Sigmoid colon (tissue), 7 donors: ENCODE measurements at regions of chr16 and their contacts with region 1.

Region 1: DNA sequence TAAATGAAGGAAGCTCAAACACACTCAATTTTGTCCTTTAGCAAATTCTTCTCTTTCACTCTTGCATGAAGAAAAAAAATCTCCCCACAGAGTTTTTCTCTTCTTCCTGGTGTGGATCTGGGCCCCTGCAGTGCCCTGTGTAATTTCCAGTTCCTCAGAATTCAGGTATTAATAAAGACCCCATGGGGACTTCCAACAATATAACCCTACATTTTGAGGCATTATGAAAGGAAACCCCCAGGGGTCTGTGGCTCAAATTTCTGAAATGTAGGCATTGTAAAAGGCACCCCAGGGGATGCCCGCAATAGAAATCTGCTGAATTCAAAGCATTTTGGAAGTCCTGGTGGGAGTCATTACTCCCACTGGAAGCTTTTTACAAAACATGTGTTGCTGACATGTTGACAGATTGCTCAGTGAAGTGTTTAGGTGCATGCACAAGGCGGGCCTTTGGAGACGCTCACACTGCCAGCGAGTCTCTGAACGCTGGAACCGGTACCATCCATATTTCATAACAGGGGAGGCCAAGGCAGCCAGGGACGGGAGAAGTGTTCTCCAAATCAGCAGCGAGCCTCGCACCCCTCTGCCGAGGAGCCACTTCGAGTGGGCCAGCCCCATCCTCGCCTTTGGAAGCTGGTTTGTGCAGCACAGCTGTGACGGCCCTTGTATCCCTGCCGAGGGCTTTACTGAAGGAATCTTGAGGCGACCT is 154.0 kb downstream of the ZNF423 start:
- DNase-seq: peak; percentile 88
- H3K4me3 ChIP-seq: peak overlapping the region in 1 of 4 donors; percentile 7
- H3K27ac ChIP-seq: peak overlapping the region; percentile 7 to 77 (median 58)
- H3K4me1 ChIP-seq: peaks cover 0 to 36% (median 26%) of the 10 kb centered on the region in 4 donors
- H3K27me3 ChIP-seq: no peaks in the 10 kb centered on the region
- CTCF ChIP-seq: no peak
- EP300 ChIP-seq: no peak
- POLR2A ChIP-seq: no peak

Region 2: DNA sequence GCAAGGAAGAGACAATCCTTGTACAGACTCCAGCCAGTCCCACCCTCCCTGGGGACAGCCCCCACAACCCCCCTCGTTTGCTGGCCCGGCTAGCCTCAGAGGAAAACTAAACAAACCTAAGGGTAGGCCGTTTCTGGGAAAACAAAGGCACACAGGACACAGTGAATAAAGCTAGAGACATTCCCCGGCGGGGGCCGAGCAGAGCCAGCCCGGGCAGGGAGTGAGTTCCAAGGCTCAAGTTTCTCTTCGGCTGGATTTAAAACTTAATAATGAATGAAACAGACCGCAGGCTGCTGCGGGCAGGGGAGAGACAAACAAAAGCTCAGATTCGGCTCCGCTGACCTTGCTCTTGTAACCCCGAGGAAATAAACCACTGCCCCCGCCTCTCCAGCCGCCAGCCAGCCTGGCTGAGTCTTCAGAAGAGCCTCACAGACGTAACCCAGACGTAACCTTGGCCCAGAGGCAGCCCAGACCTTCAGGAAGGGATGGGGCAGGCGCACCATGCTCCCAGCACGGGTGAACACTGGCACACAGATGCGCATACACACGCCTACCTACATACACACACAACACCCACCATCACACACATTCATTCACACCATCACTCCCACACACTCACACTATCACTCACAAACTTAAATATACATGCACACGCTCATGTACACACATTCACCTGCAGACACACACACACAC is 62.1 kb before region 1 on chr16:
- intact Hi-C with region 1: no loop called
- DNase-seq: no peak
- H3K4me3 ChIP-seq: peak overlapping the region in 1 of 4 donors; percentile 13
- H3K27ac ChIP-seq: peak overlapping the region; percentile 31 to 77 (median 67)
- H3K4me1 ChIP-seq: peaks cover 0 to 28% (median 20%) of the 10 kb centered on the region in 4 donors
- H3K27me3 ChIP-seq: no peaks in the 10 kb centered on the region
- CTCF ChIP-seq: no peak
- EP300 ChIP-seq: no peak
- POLR2A ChIP-seq: no peak

Region 3: DNA sequence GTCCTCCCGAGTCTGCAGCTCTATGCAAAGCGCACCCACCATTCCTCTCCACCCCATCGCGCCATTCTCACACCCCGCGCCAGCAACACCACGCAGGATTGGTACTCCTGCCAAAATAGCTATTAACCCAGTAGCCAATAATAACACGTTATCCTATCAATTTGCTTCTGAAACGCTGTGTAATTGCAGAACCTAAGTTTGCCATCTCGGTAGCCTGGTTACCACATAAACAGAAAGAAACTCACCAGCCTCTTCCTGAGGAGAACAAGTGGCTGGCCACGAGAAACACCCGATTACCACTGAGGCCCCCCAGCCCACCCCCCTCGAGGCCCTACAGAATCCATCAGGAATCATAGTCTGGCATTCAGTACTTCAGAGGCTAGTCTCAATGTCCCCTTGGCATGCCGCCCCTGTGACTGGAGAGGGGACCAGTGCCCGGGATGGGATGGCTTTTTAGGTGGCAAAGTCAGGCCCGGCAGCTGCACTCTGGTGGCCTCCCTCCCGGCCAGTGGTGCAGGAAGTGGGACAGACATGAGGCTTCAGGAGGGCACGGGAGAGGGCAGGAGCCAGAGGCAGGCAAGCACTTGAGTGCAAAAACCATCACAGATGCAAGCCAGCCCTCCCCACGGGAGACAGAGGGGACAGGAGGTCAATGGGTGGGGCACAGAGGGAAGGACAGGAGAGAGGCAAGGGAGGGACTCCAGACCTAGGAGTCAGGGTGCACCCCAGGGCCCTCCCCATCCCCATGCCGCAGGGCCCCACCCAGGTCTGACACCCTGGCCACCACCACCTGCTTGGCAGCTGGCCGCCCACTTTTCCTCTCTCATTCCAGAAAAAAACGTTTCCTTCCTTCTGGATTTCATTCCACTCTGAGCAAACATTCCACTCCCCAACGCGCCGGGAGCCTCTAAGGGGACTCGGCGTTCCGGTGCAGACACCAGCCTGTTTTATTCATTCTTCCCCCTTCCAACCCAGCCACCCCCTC is 38.6 kb before region 1 on chr16:
- intact Hi-C with region 1: loop called (anchors 5 kb)
- DNase-seq: no peak
- H3K4me3 ChIP-seq: peak overlapping the region in 3 of 4 donors; percentile 27 to 40 (median 38)
- H3K27ac ChIP-seq: peak overlapping the region; percentile 75 to 87 (median 82)
- H3K4me1 ChIP-seq: peaks cover 0 to 39% (median 32%) of the 10 kb centered on the region in 4 donors
- H3K27me3 ChIP-seq: no peaks in the 10 kb centered on the region
- CTCF ChIP-seq: no peak
- EP300 ChIP-seq: no peak
- POLR2A ChIP-seq: no peak

Region 4: GRCh38 chr16:49739381-49739780 is 37.4 kb after region 1 on chr16:
- intact Hi-C with region 1: no loop called
- DNase-seq: no peak
- H3K4me3 ChIP-seq: no peak overlapping the region
- H3K27ac ChIP-seq: no peak overlapping the region
- H3K4me1 ChIP-seq: peaks cover 0 to 9% (median 0%) of the 10 kb centered on the region in 4 donors
- H3K27me3 ChIP-seq: peaks cover 0 to 3% (median 0%) of the 10 kb centered on the region in 3 donors
- CTCF ChIP-seq: no peak
- EP300 ChIP-seq: no peak
- POLR2A ChIP-seq: no peak